OCI-LY7 (cell line): ENCODE measurements at regions of chr10 and their contacts with region 1.

Region 1: DNA sequence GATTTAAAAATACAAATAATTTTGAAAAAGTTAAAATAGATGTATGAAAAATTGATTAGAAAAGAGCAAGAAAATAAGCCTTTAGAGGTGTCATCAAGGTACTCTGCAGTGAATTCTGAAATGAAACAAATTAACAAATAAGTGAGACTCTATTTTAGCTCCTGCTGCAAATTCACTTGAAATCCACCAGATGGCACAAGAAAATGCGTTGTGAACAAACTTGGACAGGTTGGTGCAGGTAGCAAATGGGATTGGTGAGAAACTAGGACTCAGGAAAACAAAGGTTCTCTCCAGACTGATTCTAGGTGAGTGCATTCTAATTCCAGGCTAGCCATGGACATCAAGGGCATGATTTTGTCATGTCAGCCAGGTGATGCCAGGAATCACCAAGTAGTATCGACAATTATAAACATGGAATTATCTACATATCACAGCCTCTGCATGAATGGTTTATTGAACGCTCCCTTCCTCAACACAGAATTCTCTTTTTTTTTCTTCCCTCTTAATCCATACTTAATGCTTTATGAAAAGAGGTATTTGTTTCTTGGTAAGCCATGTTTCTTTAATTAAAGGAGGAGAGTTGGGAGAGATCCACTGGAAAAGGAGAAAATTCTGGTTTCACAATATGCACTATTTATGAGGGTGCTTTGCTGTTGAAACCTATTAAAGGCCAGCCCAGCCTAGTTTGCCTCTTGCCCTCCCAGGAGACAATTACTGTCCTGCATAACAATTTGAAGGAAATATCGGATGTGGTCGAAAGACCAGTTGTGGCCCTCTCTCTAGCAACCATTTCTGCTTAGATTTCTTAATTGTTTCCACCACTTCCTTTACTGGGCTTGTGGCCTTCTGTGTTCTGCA is 118.1 kb downstream of the ZNF365 start:
- DNase-seq: peak; percentile 72
- H3K4me3 ChIP-seq: no peak overlapping the region
- H3K27ac ChIP-seq: no peak overlapping the region
- H3K4me1 ChIP-seq: peaks cover 3% of the 10 kb centered on the region
- CTCF ChIP-seq: peak; percentile 93

Region 2: DNA sequence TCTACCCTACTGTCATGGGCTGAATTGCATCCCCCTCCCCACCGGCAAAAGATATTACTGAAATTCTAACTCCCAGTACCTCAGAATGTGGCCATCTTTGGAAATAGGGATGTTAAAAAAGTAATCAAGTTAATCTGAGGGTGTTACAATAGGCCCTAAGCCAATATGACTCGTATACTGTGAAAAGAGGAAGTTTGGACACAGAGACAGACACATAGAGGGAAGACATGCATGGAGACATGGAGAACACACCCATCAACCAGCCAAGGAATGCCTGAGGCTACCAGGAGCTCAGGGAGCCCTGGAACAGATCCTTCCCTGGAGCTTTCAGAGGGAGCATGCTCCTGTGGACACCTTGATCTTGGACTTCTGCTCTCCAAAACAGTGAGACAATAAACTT is 174.0 kb after region 1 on chr10:
- CTCF ChIA-PET with region 1: no interaction called
- POLR2A ChIA-PET with region 1: no interaction called
- intact Hi-C with region 1: no loop called
- DNase-seq: no peak
- H3K4me3 ChIP-seq: no peak overlapping the region
- H3K27ac ChIP-seq: no peak overlapping the region
- H3K4me1 ChIP-seq: no peaks in the 10 kb centered on the region
- CTCF ChIP-seq: no peak

Region 3: DNA sequence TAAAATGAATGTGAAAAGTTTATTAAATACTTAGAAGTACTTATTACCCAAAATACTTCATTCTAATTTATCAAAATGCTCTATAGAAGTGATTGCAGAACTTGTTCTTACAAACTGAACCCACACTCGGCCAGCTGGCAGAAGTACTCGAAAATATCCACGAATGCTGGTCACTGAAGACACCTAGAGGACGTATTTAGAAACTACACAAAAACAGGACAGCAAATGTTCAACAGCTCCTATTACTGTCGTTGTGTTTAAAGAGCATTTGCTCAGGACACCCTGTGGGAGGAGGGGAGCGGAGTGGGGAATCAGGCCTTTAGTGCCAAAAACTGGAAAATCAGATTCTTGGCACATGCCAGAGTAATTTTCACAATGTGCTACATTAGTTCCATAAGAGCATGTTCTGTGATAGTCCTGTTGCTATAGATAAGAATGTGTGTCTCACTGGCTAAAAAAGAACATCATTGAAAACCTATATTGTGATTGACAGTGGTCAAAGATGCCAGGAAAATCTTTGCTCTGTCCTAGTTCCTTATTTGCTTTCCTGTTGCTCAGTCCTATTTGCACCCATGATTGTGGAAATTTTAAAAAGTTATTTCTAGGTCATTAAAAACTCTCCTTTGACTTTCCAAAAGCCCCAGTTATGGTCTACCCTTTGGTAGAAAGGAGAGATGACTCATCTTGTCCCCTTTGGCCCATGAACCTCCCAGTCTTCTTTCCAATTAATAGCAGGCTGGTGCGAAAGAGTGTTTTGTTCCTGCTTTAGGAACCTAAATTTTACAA is 591.9 kb after region 1 on chr10:
- CTCF ChIA-PET with region 1: no interaction called
- POLR2A ChIA-PET with region 1: no interaction called
- intact Hi-C with region 1: loop called (anchors 2 kb)
- DNase-seq: peak; percentile 74
- H3K4me3 ChIP-seq: no peak overlapping the region
- H3K27ac ChIP-seq: no peak overlapping the region
- H3K4me1 ChIP-seq: no peaks in the 10 kb centered on the region
- CTCF ChIP-seq: peak; percentile 85